Heart left ventricle (tissue), 16 donors: ENCODE measurements at regions of chr12 and their contacts with region 1.

Region 1: DNA sequence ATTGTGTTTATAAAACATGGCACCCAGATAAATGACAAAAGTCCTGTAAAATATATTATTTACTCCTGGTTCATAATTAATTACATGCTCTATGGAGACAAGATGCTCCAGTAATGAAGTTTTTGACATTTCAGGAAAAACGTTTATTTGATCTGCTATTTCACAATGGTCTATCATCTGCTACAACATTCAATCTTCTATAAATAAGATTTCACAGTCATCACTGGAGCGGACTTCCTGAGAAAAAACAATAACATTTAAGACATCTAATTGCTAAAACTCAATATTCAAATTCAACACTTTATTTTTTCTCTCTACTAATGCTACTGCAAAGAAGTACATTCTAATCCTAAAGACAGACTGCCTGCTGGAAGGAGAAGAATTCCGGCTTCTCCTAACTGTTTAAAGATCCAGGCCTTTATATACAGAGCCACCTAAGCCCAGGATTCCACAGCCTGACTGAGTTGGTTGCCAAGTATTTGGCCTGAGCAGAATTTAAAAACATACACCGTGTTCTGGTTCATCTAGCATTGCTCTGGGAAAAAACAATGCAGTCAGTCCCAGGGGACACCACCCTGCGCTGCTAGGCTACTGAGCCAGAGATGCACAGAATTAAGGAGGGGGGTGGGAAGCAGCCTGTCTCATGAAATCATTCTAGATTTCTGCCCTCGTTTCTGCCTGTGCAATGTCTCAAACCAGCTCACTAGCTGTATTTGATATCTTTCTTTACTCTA is 58.0 kb downstream of the TMTC1 start:
- DNase-seq: peak; percentile 74 to 86 (median 82)
- ATAC-seq: peak; percentile 94 to 96 (median 96)
- H3K4me3 ChIP-seq: peak overlapping the region in 1 of 12 donors; percentile 4
- H3K27ac ChIP-seq: peak overlapping the region; percentile 63 to 89 (median 78)
- H3K4me1 ChIP-seq: peaks cover 9 to 58% (median 28%) of the 10 kb centered on the region in 12 donors
- H3K27me3 ChIP-seq: no peaks in the 10 kb centered on the region
- CTCF ChIP-seq: no peak
- POLR2A ChIP-seq: peak in 1 of 2 donors; percentile 37

Region 2: GRCh38 chr12:29533815-29534489 is 191.8 kb before region 1 on chr12:
- intact Hi-C with region 1: no loop called
- DNase-seq: no peak
- ATAC-seq: no peak
- H3K4me3 ChIP-seq: no peak overlapping the region
- H3K27ac ChIP-seq: no peak overlapping the region
- H3K4me1 ChIP-seq: no peaks in the 10 kb centered on the region
- H3K27me3 ChIP-seq: no peaks in the 10 kb centered on the region
- CTCF ChIP-seq: no peak
- POLR2A ChIP-seq: no peak

Region 3: GRCh38 chr12:29562167-29562776 is 163.5 kb before region 1 on chr12:
- intact Hi-C with region 1: loop called in 3 of 10 experiments (anchors 10 kb)
- DNase-seq: peak in 4 of 5 donors; percentile 30 to 69 (median 59)
- ATAC-seq: peak; percentile 76 to 97 (median 96)
- H3K4me3 ChIP-seq: no peak overlapping the region
- H3K27ac ChIP-seq: peak overlapping the region; percentile 39 to 87 (median 72)
- H3K4me1 ChIP-seq: peaks cover 8 to 69% (median 34%) of the 10 kb centered on the region in 12 donors
- H3K27me3 ChIP-seq: no peaks in the 10 kb centered on the region
- CTCF ChIP-seq: no peak
- POLR2A ChIP-seq: no peak

Region 4: GRCh38 chr12:29581631-29582030 is 144.1 kb before region 1 on chr12:
- intact Hi-C with region 1: loop called in 2 of 10 experiments (anchors 5 to 10 kb)
- DNase-seq: no peak
- ATAC-seq: no peak
- H3K4me3 ChIP-seq: no peak overlapping the region
- H3K27ac ChIP-seq: peak overlapping the region in 10 of 12 donors; percentile 12 to 76 (median 70)
- H3K4me1 ChIP-seq: peaks cover 6 to 62% (median 42%) of the 10 kb centered on the region in 12 donors
- H3K27me3 ChIP-seq: no peaks in the 10 kb centered on the region
- CTCF ChIP-seq: no peak
- POLR2A ChIP-seq: no peak

Region 5: DNA sequence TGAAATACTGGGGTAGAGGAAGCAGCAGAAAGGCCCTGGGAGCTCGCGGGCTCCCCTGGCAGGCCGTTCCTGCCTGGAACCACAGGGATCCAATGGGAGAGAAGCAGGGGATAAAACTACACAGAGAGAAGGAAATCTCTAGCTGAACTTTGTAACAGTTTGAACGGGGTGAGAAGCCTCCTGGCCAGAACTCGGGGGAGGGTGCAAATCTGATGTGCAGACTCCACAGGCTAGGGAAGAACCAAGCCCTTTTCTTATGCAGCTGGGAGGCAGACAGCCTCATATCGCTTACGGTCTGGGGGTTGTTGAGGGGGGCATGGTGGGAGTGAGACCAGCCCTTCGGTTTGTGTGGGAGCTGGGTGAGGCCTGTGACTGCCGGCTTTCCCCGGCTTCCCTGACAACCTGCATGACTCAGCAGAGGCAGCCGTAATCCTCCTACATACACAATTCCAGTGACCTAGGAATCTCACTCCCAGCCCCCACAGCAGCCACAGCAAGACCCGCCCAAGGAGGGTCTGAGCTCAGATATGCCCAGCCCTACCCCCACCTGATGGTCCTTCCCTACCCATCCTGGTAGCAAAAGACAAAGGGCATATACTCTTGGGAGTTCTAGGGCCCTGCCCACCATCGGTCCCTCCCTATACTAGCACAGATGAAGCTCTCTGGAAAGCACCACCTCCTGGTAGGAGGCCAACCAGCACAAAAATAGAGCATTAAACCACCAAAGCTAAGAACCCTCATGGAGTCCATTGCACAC is 85.0 kb before region 1 on chr12:
- intact Hi-C with region 1: no loop called
- DNase-seq: peak; percentile 45 to 67 (median 63)
- ATAC-seq: peak; percentile 23 to 69 (median 56)
- H3K4me3 ChIP-seq: peak overlapping the region in 3 of 12 donors; percentile 1 to 33 (median 6)
- H3K27ac ChIP-seq: peak overlapping the region in 11 of 12 donors; percentile 47 to 82 (median 69)
- H3K4me1 ChIP-seq: peaks cover 0 to 26% (median 13%) of the 10 kb centered on the region in 12 donors
- H3K27me3 ChIP-seq: no peaks in the 10 kb centered on the region
- CTCF ChIP-seq: peak in 3 of 12 donors; percentile 10 to 42 (median 19)
- POLR2A ChIP-seq: no peak

Region 6: GRCh38 chr12:29662734-29663323 is 62.9 kb before region 1 on chr12:
- intact Hi-C with region 1: loop called in 1 of 10 experiments (anchors 10 kb)
- DNase-seq: no peak
- ATAC-seq: peak in 3 of 4 donors; percentile 25 to 69 (median 57)
- H3K4me3 ChIP-seq: no peak overlapping the region
- H3K27ac ChIP-seq: peak overlapping the region in 2 of 12 donors; percentile 22
- H3K4me1 ChIP-seq: peaks cover 0 to 26% (median 0%) of the 10 kb centered on the region in 12 donors
- H3K27me3 ChIP-seq: no peaks in the 10 kb centered on the region
- CTCF ChIP-seq: no peak
- POLR2A ChIP-seq: no peak

Region 7: GRCh38 chr12:29691141-29691854 is 34.5 kb before region 1 on chr12:
- intact Hi-C with region 1: loop called in 1 of 10 experiments (anchors 2 kb)
- DNase-seq: no peak
- ATAC-seq: peak in 2 of 4 donors; percentile 43 to 48
- H3K4me3 ChIP-seq: no peak overlapping the region
- H3K27ac ChIP-seq: no peak overlapping the region
- H3K4me1 ChIP-seq: peaks cover 0 to 20% (median 0%) of the 10 kb centered on the region in 12 donors
- H3K27me3 ChIP-seq: no peaks in the 10 kb centered on the region
- CTCF ChIP-seq: no peak
- POLR2A ChIP-seq: no peak

Region 8: DNA sequence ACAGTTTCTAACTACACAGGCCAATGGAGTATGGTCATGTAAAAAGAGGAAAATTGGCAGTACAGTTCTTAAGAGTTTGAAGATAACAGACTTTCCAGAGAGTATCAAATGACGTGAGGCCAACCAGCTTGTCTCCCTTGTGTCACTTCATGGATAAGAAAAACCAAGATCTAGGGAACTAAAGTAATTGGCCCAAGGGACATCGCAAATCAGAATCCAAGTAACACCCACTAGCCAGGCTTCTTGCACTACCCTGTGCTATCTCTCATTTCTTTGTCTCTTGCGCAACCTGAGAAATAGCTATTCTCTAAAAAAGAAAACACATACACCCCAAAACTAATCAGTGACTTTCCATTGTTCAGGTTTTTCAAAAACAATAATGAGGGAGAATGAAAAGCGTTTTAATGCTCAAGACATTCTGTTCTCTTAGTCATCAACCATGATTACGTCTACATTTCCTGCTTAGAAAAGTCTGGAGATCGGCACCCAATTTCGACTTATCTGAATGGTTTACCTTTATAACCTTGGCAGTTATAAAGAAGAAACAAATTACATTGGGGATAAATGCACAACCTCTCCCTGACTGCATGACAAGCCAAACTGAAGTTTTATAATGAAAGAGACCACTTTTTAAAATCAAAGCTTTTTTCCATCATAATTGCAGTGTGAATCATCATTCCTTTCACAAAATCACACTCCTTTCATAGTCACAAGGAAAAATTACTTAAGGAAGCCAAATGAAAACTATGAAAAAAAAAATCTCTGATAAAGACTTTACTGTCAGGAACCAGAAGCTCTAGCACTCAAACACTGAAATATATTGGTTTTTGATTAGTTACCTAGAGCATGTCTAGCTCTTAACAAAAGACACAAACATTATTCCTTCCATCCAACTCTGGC is 15.8 kb after region 1 on chr12:
- intact Hi-C with region 1: loop called in 1 of 10 experiments (anchors 2 kb)
- DNase-seq: no peak
- ATAC-seq: peak; percentile 49 to 84 (median 79)
- H3K4me3 ChIP-seq: peak overlapping the region in 1 of 12 donors; percentile 20
- H3K27ac ChIP-seq: peak overlapping the region; percentile 51 to 82 (median 70)
- H3K4me1 ChIP-seq: peaks cover 0 to 73% (median 44%) of the 10 kb centered on the region in 12 donors
- H3K27me3 ChIP-seq: no peaks in the 10 kb centered on the region
- CTCF ChIP-seq: no peak
- POLR2A ChIP-seq: peak in 1 of 2 donors; percentile 10

Region 9: GRCh38 chr12:29752121-29752520 is 26.4 kb after region 1 on chr12:
- intact Hi-C with region 1: no loop called
- DNase-seq: no peak
- ATAC-seq: no peak
- H3K4me3 ChIP-seq: no peak overlapping the region
- H3K27ac ChIP-seq: no peak overlapping the region
- H3K4me1 ChIP-seq: peaks cover 2 to 28% (median 16%) of the 10 kb centered on the region in 12 donors
- H3K27me3 ChIP-seq: no peaks in the 10 kb centered on the region
- CTCF ChIP-seq: no peak
- POLR2A ChIP-seq: no peak

Region 10: GRCh38 chr12:29762637-29763300 is 37.0 kb after region 1 on chr12:
- intact Hi-C with region 1: loop called in 1 of 10 experiments (anchors 5 kb)
- DNase-seq: peak in 4 of 5 donors; percentile 43 to 78 (median 63)
- ATAC-seq: peak; percentile 92 to 97 (median 96)
- H3K4me3 ChIP-seq: no peak overlapping the region
- H3K27ac ChIP-seq: peak overlapping the region in 10 of 12 donors; percentile 9 to 53 (median 28)
- H3K4me1 ChIP-seq: peaks cover 0 to 26% (median 15%) of the 10 kb centered on the region in 12 donors
- H3K27me3 ChIP-seq: no peaks in the 10 kb centered on the region
- CTCF ChIP-seq: no peak
- POLR2A ChIP-seq: no peak